ENCODE measurements at regions of chr20 and their contacts with region 1.

Region 1: GRCh38 chr20:35398660-35399144 is 13.1 kb downstream of the UQCC1 start:
- DNase-seq: no peak
- H3K4me3 ChIP-seq: no peak overlapping the region
- H3K27ac ChIP-seq: no peak overlapping the region
- H3K4me1 ChIP-seq: no peaks in the 10 kb centered on the region
- H3K27me3 ChIP-seq: no peaks in the 10 kb centered on the region
- CTCF ChIP-seq: no peak
- EP300 ChIP-seq: no peak
- POLR2A ChIP-seq: no peak
- RAD21 ChIP-seq: no peak

Region 2: GRCh38 chr20:35410613-35411012 is 11.9 kb after region 1 on chr20:
- CTCF ChIA-PET with region 1: no interaction called
- POLR2A ChIA-PET with region 1: interaction called, 11 read pairs
- DNase-seq: no peak
- H3K4me3 ChIP-seq: peak overlapping the region; percentile 89 to 90 (median 90); a peak in 6 of 8 replicates
- H3K27ac ChIP-seq: no peak overlapping the region
- H3K4me1 ChIP-seq: peaks cover 0 to 5% (median 0%) of the 10 kb centered on the region in 4 experiments; a peak in 2 of 7 replicates
- H3K27me3 ChIP-seq: no peaks in the 10 kb centered on the region
- CTCF ChIP-seq: no peak
- EP300 ChIP-seq: no peak
- POLR2A ChIP-seq: no peak
- RAD21 ChIP-seq: no peak